CD4-positive, alpha-beta memory T cell (primary cell): ENCODE measurements at regions of chr6 and their contacts with region 1.

Region 1: DNA sequence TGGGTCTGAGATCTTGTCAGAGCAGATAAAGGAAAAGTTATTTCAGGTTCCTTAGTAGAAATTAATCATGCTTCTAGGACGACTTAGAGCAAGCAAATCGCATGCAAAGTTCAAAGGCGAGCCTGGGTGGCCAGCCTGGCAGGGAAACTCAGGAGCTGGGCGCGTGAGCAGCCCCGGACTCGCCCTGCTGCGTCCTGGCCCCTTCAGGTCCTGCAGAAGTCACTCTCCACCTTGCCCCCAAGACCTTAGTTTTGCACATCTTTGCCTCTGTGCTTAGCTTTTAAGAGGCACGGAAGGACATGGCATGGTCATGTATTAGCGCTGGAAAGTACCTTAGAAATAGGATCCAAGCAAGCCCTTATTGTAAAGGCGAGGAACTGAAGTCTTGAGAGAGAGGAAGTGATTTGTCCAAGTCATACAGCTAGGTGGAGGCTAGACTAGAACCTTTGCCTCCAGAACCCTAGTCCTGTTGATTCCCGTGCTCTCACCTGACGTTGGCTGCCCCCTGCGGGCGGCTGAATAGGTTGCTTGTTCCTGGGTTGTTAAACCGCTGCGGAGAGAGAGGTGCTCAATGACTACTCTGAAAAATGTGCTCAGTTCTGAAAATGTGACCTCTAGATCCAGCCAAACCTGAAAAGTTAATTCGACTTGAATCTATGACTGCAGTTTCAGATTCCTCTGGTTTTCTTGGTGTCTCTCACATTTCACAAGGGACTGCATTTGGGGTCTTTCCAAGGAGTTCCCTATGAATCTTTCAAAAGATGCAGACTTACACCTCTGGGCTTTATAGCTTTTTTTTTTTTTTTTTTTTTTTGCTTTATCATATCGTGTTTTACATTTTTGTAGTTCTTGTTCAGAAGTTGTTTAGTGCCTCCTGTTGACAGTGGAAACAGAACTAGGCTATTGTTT is 2.7 kb downstream of the MYB start:
- DNase-seq: peak; percentile 65 to 79 (median 71)
- H3K4me3 ChIP-seq: peak overlapping the region; percentile 51 to 57
- H3K4me3 Mint-ChIP-seq: peak overlapping the region; percentile 87 to 96 (median 92)
- H3K27ac ChIP-seq: no peak overlapping the region
- H3K27ac Mint-ChIP-seq: peak overlapping the region; percentile 17 to 87 (median 57)
- H3K4me1 ChIP-seq: peaks cover 12% of the 10 kb centered on the region
- H3K4me1 Mint-ChIP-seq: peaks cover 8 to 28% (median 17%) of the 10 kb centered on the region in 4 donors
- H3K27me3 ChIP-seq: no peaks in the 10 kb centered on the region
- H3K27me3 Mint-ChIP-seq: no peaks in the 10 kb centered on the region

Region 2: DNA sequence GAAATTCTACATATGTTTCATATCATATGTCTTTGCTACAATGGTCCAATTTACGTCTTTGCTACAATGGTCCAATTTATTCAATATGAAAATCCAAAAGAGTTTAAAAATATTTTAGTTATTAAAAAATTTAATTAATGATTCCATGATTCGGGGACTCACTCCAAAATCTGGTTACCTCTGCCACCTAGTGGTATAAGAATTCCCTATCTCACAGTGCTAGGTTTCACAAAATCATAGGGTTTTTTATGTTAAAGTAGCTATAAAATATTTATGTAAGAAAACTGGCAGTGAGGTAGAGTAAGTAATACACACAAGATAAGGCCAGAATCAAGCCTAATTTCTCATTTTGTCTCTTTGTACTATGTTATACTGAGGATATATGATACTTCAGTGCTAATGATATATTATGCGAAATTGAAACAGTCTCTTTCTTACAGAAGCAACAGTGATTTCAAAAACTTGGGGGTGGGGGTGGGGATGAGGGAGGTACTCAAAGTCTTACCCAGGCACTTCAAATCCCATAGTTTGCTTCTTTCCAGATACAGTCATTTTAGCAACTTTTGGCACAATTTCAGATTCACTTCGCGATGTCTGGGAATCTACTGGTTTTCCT is 181.4 kb before region 1 on chr6:
- CTCF ChIA-PET with region 1: interaction called, 4 read pairs
- POLR2A ChIA-PET with region 1: no interaction called
- intact Hi-C with region 1: loop called (anchors 2 kb)
- DNase-seq: peak in 3 of 5 donors; percentile 19 to 27 (median 20)
- H3K4me3 ChIP-seq: no peak overlapping the region
- H3K4me3 Mint-ChIP-seq: no peak overlapping the region
- H3K27ac ChIP-seq: no peak overlapping the region
- H3K27ac Mint-ChIP-seq: no peak overlapping the region
- H3K4me1 ChIP-seq: peaks cover 4% of the 10 kb centered on the region
- H3K4me1 Mint-ChIP-seq: peaks cover under 1 to 11% (median 6%) of the 10 kb centered on the region in 4 donors
- H3K27me3 ChIP-seq: no peaks in the 10 kb centered on the region
- H3K27me3 Mint-ChIP-seq: no peaks in the 10 kb centered on the region

Region 3: DNA sequence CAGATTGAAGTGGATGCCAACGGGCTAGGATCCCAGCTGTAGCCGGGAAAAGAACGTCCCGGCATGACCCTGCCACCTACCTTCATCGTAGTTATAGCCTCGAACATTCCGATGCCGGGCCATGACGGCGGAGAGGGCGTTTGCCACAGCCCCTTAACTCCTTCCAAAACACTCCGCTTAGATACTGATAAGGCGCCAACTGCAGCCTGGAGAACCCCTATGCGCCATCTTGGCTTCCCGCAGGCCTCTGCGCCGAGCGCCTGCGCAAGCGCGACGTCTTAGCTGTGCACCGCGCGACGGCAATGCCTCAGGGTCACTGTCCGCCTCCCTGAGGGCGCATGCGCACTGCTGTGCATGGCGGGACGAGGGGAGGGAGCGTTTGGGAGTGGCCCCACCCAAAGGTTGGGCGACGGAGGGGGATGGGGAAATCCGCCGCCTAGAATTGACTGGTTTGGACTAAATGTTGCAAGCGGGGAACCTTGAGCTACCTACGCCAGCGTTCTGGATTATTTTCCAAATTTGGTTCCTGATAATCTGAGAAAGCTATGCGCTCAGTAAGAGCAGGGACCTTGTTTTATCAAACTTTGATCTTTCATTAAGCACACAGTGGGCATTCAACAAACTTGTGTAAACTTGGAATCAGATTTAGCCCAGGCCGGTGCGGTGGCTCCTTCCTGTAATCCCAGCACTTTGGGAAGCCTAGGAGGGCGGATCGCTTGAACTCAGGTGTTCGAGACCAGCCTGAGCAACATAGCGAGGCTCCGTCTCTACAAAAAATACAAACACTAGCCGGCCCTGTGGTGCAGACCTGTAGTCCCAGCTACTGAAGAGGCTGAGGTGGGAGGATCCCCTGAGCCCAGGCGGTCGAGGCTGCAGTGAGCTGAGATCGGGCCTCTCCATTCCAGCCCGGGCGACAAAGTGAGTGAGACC is 129.0 kb before region 1 on chr6 and contains the start of gene HBS1L:
- CTCF ChIA-PET with region 1: interaction called, 32 read pairs
- POLR2A ChIA-PET with region 1: interaction called, 27 read pairs
- intact Hi-C with region 1: loop called (anchors 1 kb)
- DNase-seq: peak; percentile 95 to 97 (median 96)
- H3K4me3 ChIP-seq: peak within 1 kb of the TSS; percentile 54 to 91
- H3K4me3 Mint-ChIP-seq: peak within 1 kb of the TSS; percentile 93 to 99 (median 97)
- H3K27ac ChIP-seq: peak within 1 kb of the TSS; percentile 91
- H3K27ac Mint-ChIP-seq: peak within 1 kb of the TSS; percentile 96 to 99 (median 99)
- H3K4me1 ChIP-seq: peaks cover 37% of the 10 kb centered on the region
- H3K4me1 Mint-ChIP-seq: peaks cover 27 to 44% (median 37%) of the 10 kb centered on the region in 4 donors
- H3K27me3 ChIP-seq: no peaks in the 10 kb centered on the region
- H3K27me3 Mint-ChIP-seq: no peaks in the 10 kb centered on the region
- total RNA-seq, gene HBS1L: 63.8 to 69.9 TPM

Region 4: DNA sequence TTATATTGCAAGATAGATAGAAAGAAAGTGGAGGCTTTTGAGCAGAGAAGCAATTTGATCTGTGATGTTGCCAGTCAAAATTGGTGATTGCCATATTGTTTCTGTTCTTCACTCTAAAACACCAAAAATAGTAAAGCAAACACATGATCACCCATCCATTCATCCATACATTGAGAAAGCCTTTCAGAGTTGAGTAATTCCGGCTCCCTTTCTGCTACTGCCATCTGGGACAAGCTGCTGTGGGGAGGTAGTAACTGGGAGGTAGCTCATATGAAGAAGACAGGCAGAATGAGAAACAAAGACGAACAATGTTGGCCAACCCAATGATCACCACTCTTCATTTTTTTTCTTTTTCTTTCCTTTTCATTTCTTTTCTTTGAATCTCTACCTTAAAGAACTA is 78.1 kb before region 1 on chr6:
- CTCF ChIA-PET with region 1: interaction called, 12 read pairs
- POLR2A ChIA-PET with region 1: interaction called, 10 read pairs
- intact Hi-C with region 1: no loop called
- DNase-seq: no peak
- H3K4me3 ChIP-seq: no peak overlapping the region
- H3K4me3 Mint-ChIP-seq: no peak overlapping the region
- H3K27ac ChIP-seq: no peak overlapping the region
- H3K27ac Mint-ChIP-seq: no peak overlapping the region
- H3K4me1 ChIP-seq: peaks cover 36% of the 10 kb centered on the region
- H3K4me1 Mint-ChIP-seq: peaks cover 24 to 42% (median 29%) of the 10 kb centered on the region in 4 donors
- H3K27me3 ChIP-seq: no peaks in the 10 kb centered on the region
- H3K27me3 Mint-ChIP-seq: no peaks in the 10 kb centered on the region

Region 5: DNA sequence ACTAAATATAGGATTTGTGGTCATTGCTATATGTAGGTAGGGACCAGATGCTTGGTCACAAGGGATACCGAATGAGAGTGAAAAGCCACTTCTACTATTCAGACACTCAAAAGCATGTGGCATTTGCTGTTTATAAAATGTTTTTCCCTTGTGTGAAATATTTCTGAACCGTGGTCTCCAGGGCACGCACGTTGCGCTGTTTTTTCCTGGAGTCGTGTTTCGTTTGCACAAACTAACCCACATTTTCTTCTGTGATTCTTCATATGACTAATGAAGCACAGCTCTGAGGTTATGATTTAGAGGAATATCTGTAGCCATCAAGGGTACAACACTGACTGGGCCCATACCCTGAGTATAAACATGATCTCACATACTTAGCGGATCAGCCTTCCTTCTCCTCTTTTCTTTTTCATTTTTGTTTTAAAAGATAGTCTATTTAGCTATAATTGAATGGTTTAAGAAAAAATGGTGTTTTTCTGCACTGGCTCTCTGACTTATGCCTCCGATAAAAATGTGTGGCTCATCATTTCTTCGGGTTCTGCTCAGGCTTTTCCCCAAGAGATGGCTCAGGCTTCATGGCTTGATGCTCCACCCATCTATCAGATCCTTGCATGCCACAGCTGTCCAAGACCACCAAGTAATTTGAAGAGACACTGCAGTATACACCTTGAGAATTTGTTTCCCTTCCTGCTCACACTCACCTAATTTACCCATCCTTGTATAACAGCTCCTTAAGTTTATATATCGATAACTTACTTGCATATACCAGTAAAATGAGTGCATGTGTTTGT is 69.2 kb before region 1 on chr6:
- CTCF ChIA-PET with region 1: interaction called, 3 read pairs
- POLR2A ChIA-PET with region 1: interaction called, 3 read pairs
- intact Hi-C with region 1: loop called (anchors 2 kb)
- DNase-seq: no peak
- H3K4me3 ChIP-seq: no peak overlapping the region
- H3K4me3 Mint-ChIP-seq: peak overlapping the region in 5 of 8 donors; percentile 10 to 43 (median 24)
- H3K27ac ChIP-seq: no peak overlapping the region
- H3K27ac Mint-ChIP-seq: peak overlapping the region in 3 of 7 donors; percentile 6 to 38 (median 18)
- H3K4me1 ChIP-seq: peaks cover 34% of the 10 kb centered on the region
- H3K4me1 Mint-ChIP-seq: peaks cover 28 to 55% (median 36%) of the 10 kb centered on the region in 4 donors
- H3K27me3 ChIP-seq: no peaks in the 10 kb centered on the region
- H3K27me3 Mint-ChIP-seq: peaks cover 0 to 17% of the 10 kb centered on the region in 2 donors

Region 6: DNA sequence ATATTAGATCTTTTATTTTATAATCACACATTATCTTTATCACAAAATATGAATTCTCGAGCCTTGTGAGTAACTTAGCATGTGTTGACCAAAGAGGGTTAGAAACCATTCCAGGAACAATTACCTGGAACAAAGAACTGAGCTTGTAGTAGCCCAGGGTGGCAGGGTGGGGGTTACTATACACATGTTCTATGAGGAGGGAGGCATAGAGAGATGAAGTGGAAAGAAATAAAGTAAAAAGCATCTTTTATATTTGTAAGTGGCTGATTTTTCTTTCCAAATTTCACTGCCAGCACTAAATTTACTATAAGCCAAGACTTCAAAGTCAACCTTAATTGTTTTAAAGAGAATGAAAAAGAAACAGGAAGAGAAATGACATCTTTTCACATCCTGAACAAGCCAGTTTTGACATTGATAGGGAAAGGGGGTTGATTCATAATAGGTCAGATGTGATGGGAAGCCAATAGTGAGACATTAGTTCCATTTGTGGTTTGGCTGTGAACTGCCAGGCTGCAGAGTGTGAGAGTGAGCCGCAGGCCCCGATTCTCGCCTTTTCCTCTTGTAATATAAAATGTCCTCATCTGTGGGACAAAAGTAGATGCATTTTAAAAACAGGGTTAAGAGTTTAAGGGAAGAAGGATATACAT is 55.4 kb before region 1 on chr6:
- CTCF ChIA-PET with region 1: interaction called, 10 read pairs
- POLR2A ChIA-PET with region 1: interaction called, 3 read pairs
- intact Hi-C with region 1: no loop called
- DNase-seq: peak; percentile 61 to 73 (median 70)
- H3K4me3 ChIP-seq: no peak overlapping the region
- H3K4me3 Mint-ChIP-seq: peak overlapping the region; percentile 21 to 91 (median 82)
- H3K27ac ChIP-seq: peak overlapping the region; percentile 25
- H3K27ac Mint-ChIP-seq: peak overlapping the region; percentile 90 to 98 (median 95)
- H3K4me1 ChIP-seq: peaks cover 23% of the 10 kb centered on the region
- H3K4me1 Mint-ChIP-seq: peaks cover 15 to 34% (median 30%) of the 10 kb centered on the region in 4 donors
- H3K27me3 ChIP-seq: no peaks in the 10 kb centered on the region
- H3K27me3 Mint-ChIP-seq: no peaks in the 10 kb centered on the region

Region 7: DNA sequence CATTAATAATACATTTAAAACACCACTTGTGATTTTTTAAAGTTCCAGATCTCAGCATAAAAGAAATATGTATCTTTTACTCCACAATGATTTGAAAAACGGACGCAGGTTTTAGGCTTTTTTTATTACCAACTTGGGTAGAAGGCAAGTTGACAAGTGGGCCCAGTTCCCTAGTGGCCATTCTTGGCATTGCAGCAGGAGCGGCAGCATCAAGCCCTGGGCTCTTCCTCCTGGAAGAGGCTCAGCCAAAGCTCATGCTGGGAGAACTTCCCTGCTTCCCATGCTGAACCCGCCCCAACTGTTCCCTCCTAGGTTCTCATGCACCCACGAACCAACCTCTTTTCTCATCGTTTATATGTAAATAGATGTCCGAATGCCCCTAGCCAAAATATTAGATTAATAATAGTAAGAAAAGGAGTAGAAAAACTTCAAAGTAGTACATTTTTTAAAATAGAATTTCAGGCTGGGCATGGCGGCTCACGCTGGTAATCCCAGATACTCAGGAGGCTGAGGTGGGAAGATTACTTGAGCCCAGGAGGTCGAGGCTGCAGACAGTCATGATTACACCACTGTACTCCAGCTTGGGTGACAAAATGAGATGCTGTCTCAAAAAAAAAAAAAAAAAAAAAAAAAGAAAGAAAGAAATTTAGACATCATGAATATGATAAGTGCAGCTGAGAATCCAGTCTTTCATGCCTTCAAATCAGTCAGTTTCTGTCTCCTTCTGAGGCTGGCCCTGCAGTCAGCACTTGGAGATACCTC is 20.9 kb before region 1 on chr6:
- CTCF ChIA-PET with region 1: interaction called, 24 read pairs
- POLR2A ChIA-PET with region 1: interaction called, 3 read pairs
- intact Hi-C with region 1: loop called (anchors 2 kb)
- DNase-seq: peak; percentile 3 to 35 (median 19)
- H3K4me3 ChIP-seq: no peak overlapping the region
- H3K4me3 Mint-ChIP-seq: peak overlapping the region in 6 of 8 donors; percentile 18 to 48 (median 30)
- H3K27ac ChIP-seq: no peak overlapping the region
- H3K27ac Mint-ChIP-seq: peak overlapping the region in 2 of 7 donors; percentile 36 to 37
- H3K4me1 ChIP-seq: peaks cover 12% of the 10 kb centered on the region
- H3K4me1 Mint-ChIP-seq: peaks cover 6 to 27% (median 11%) of the 10 kb centered on the region in 4 donors
- H3K27me3 ChIP-seq: no peaks in the 10 kb centered on the region
- H3K27me3 Mint-ChIP-seq: peaks cover 0 to 5% of the 10 kb centered on the region in 2 donors

Region 8: DNA sequence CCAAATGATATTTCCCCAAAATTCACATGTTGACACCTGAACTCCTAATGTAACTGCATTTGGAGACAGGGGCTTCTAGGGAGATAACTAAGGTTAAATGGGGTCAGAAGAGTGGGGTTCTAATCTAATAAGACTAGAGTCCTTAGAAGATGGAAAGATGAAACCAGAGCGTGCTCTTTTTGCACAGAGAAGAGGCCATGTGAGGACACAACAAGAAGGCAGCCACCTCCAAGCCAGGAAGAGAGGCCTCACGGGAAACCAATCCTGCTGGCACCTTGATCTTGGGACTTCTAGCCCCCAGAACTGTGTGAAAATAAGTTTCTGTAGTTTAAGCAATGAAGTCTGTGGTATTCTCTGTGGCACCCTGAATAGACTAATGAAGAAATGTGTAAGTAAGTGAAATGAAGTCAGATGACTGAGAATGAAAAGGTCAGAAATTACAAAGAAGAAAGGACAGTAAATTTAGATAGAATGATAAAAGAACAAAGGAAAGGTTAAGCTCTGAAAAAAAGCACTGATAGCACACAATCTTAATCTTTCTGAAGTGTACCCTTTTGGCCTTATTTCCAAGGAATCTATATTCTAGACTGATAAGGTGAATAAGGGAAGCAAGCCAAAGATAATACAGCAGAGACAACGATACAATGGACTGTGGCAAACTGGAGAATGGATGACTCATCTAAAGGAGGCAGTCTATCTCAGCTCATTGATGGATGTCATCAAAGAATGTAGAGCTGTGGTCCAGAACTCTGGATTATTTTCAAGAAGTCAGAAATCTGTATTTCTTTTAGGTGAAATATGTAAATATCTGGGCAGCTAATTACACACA is 107.7 kb after region 1 on chr6:
- CTCF ChIA-PET with region 1: no interaction called
- POLR2A ChIA-PET with region 1: no interaction called
- intact Hi-C with region 1: no loop called
- DNase-seq: no peak
- H3K4me3 ChIP-seq: no peak overlapping the region
- H3K4me3 Mint-ChIP-seq: no peak overlapping the region
- H3K27ac ChIP-seq: no peak overlapping the region
- H3K27ac Mint-ChIP-seq: no peak overlapping the region
- H3K4me1 ChIP-seq: no peaks in the 10 kb centered on the region
- H3K4me1 Mint-ChIP-seq: peaks cover 0 to 1% (median 0%) of the 10 kb centered on the region in 4 donors
- H3K27me3 ChIP-seq: no peaks in the 10 kb centered on the region
- H3K27me3 Mint-ChIP-seq: no peaks in the 10 kb centered on the region